Aorta (tissue), 5 donors: ENCODE measurements at regions of chr6 and their contacts with region 1.

Region 1: GRCh38 chr6:166999145-166999883 is at the start of gene CEP43:
- DNase-seq: peak; percentile 97
- ATAC-seq: peak; percentile 100
- H3K4me3 ChIP-seq: peak within 1 kb of the TSS; percentile 89 to 95
- H3K27ac ChIP-seq: peak within 1 kb of the TSS in 1 of 2 donors; percentile 10
- H3K4me1 ChIP-seq: no peaks in the 10 kb centered on the region
- H3K27me3 ChIP-seq: no peaks in the 10 kb centered on the region
- total RNA-seq, gene CEP43: 8.4 to 13.6 TPM

Region 2: GRCh38 chr6:166466178-166467122 is 532.9 kb before region 1 on chr6:
- intact Hi-C with region 1: loop called in 1 of 2 experiments (anchors 5 kb)
- DNase-seq: no peak
- ATAC-seq: peak; percentile 47
- H3K4me3 ChIP-seq: no peak overlapping the region
- H3K27ac ChIP-seq: peak overlapping the region in 1 of 2 donors; percentile 65
- H3K4me1 ChIP-seq: no peaks in the 10 kb centered on the region
- H3K27me3 ChIP-seq: no peaks in the 10 kb centered on the region

Region 3: GRCh38 chr6:166619912-166620311 is 379.4 kb before region 1 on chr6:
- intact Hi-C with region 1: loop called (anchors 5 to 10 kb)
- DNase-seq: peak in 1 of 2 donors; percentile 71
- ATAC-seq: peak; percentile 70
- H3K4me3 ChIP-seq: no peak overlapping the region
- H3K27ac ChIP-seq: no peak overlapping the region
- H3K4me1 ChIP-seq: peaks cover 0 to 4% of the 10 kb centered on the region in 2 donors
- H3K27me3 ChIP-seq: no peaks in the 10 kb centered on the region

Region 4: DNA sequence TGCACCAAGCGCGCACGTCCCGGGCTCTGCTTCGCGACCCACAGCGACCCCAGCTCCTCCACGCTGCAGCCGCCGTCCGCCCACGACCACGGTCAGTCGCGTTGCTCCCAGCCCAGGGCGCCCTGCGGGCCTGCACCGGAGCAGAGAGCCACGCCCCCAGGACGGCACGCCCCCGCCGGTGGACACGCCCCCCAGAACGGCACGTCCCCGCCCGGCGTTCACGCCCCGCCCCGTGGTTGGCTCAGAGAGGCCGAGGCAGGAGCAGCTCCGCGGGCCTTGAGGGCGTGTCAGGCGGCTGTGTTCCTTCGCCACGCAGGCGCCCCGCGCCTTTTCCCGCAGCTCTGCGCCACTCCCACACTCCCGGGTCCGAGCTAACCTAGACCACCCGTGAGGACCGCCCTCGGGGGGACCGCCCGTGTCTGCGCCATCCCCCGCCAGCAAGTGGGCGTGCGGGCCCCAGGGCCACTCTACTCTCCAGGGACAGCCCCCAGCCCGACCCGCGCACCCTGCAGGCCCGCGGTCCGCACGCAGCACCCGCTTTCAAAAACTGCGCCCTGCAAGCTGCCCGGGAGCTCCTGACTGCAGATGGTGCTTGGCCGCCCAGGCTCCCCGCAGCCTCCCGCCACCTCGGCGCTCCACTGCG is 42.7 kb before region 1 on chr6 and contains the start of gene RNASET2:
- intact Hi-C with region 1: loop called (anchors 1 to 2 kb)
- DNase-seq: peak; percentile 99 to 100
- ATAC-seq: peak; percentile 98
- H3K4me3 ChIP-seq: peak within 1 kb of the TSS; percentile 70 to 83
- H3K27ac ChIP-seq: peak within 1 kb of the TSS in 1 of 2 donors; percentile 45
- H3K4me1 ChIP-seq: peaks cover 0 to 1% of the 10 kb centered on the region in 2 donors
- H3K27me3 ChIP-seq: no peaks in the 10 kb centered on the region
- total RNA-seq, gene RNASET2: 23.3 to 64.8 TPM

Region 5: DNA sequence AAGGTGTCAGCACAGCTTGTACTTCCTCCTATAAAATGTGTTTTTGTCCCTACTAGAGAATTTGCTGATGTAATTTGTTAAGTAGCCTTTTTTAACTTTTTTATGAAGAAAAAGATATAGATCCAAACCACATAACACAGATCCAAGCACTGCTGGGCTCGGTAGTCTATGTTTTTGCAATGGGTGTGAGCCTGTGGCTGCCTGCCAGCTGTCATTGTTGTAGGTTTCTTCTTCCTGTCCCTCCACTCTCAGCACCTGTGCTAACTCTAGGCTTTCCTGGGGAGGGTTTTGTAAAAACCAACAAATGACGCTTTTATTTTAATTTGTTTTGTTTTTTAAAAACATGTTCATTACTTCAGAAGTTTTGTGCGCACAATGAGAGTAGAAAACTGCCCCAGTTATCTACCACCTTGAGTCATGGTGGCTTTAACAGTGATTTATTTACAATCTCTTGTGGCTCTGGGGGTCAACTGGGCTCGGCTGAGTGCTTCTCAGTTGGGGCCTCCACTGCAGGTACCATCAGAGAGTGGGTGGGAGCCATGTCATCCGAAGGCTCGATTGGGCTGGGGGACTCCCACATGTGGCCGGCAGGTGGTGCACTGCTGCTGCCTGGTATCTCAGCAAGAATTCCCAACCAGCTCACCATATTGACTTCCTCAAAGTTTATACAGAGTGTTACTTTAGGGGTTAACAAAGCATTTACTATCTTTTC is 120.5 kb after region 1 on chr6:
- intact Hi-C with region 1: no loop called
- DNase-seq: no peak
- ATAC-seq: no peak
- H3K4me3 ChIP-seq: no peak overlapping the region
- H3K27ac ChIP-seq: no peak overlapping the region
- H3K4me1 ChIP-seq: no peaks in the 10 kb centered on the region
- H3K27me3 ChIP-seq: no peaks in the 10 kb centered on the region